ENCODE measurements at regions of chr11 and their contacts with region 1.

Region 1: GRCh38 chr11:123246749-123247495 is 51.9 kb upstream of the CLMP start:
- DNase-seq: peak; percentile 70 to 78 (median 77)
- H3K4me3 ChIP-seq: no peak overlapping the region
- H3K4me3 Mint-ChIP-seq: peak overlapping the region in 5 of 8 donors; percentile 27 to 60 (median 36)
- H3K27ac ChIP-seq: no peak overlapping the region
- H3K27ac Mint-ChIP-seq: no peak overlapping the region
- H3K4me1 ChIP-seq: no peaks in the 10 kb centered on the region
- H3K4me1 Mint-ChIP-seq: peaks cover 3 to 7% (median 4%) of the 10 kb centered on the region in 4 donors
- H3K27me3 ChIP-seq: no peaks in the 10 kb centered on the region
- H3K27me3 Mint-ChIP-seq: peaks cover 13 to 16% of the 10 kb centered on the region in 2 donors

Region 2: GRCh38 chr11:122863704-122864326 is 383.1 kb before region 1 on chr11:
- CTCF ChIA-PET with region 1: interaction called, 8 read pairs
- POLR2A ChIA-PET with region 1: no interaction called
- intact Hi-C with region 1: loop called (anchors 1 kb)
- DNase-seq: peak; percentile 24 to 49 (median 37)
- H3K4me3 ChIP-seq: no peak overlapping the region
- H3K4me3 Mint-ChIP-seq: no peak overlapping the region
- H3K27ac ChIP-seq: no peak overlapping the region
- H3K27ac Mint-ChIP-seq: no peak overlapping the region
- H3K4me1 ChIP-seq: no peaks in the 10 kb centered on the region
- H3K4me1 Mint-ChIP-seq: no peaks in the 10 kb centered on the region
- H3K27me3 ChIP-seq: no peaks in the 10 kb centered on the region
- H3K27me3 Mint-ChIP-seq: peaks cover 19 to 28% of the 10 kb centered on the region in 2 donors

Region 3: DNA sequence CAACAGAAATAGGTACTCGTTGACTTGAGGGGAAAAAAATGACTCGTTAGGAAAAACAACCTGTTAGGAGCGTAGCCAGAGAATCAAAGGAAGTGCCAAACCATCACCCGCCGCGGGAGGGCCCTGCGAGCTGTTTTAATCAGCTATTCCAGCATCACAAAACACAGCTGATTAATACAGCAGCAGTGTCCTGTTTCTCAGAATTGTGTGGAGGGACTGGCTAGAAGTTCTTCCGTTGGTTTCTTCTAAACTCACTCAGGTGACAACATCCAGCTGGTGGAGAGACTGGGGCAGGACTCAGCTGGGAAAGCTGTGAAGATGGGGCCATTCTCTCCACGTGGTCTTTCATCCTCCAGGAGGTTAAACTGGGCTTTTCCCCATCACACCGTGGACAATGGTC is 213.0 kb before region 1 on chr11:
- CTCF ChIA-PET with region 1: interaction called, 11 read pairs
- POLR2A ChIA-PET with region 1: no interaction called
- intact Hi-C with region 1: no loop called
- DNase-seq: no peak
- H3K4me3 ChIP-seq: no peak overlapping the region
- H3K4me3 Mint-ChIP-seq: no peak overlapping the region
- H3K27ac ChIP-seq: no peak overlapping the region
- H3K27ac Mint-ChIP-seq: no peak overlapping the region
- H3K4me1 ChIP-seq: no peaks in the 10 kb centered on the region
- H3K4me1 Mint-ChIP-seq: peaks cover 0 to 2% (median 0%) of the 10 kb centered on the region in 4 donors
- H3K27me3 ChIP-seq: no peaks in the 10 kb centered on the region
- H3K27me3 Mint-ChIP-seq: peaks cover 2 to 3% of the 10 kb centered on the region in 2 donors

Region 4: GRCh38 chr11:123083623-123084029 is 163.3 kb before region 1 on chr11:
- CTCF ChIA-PET with region 1: interaction called, 10 read pairs
- POLR2A ChIA-PET with region 1: no interaction called
- intact Hi-C with region 1: no loop called
- DNase-seq: peak; percentile 56 to 91 (median 72)
- H3K4me3 ChIP-seq: peak overlapping the region in 1 of 2 donors; percentile 3
- H3K4me3 Mint-ChIP-seq: peak overlapping the region; percentile 73 to 88 (median 78)
- H3K27ac ChIP-seq: peak overlapping the region; percentile 45
- H3K27ac Mint-ChIP-seq: peak overlapping the region; percentile 93 to 96 (median 93)
- H3K4me1 ChIP-seq: peaks cover 57% of the 10 kb centered on the region
- H3K4me1 Mint-ChIP-seq: peaks cover 31 to 66% (median 50%) of the 10 kb centered on the region in 4 donors
- H3K27me3 ChIP-seq: no peaks in the 10 kb centered on the region
- H3K27me3 Mint-ChIP-seq: no peaks in the 10 kb centered on the region

Region 5: DNA sequence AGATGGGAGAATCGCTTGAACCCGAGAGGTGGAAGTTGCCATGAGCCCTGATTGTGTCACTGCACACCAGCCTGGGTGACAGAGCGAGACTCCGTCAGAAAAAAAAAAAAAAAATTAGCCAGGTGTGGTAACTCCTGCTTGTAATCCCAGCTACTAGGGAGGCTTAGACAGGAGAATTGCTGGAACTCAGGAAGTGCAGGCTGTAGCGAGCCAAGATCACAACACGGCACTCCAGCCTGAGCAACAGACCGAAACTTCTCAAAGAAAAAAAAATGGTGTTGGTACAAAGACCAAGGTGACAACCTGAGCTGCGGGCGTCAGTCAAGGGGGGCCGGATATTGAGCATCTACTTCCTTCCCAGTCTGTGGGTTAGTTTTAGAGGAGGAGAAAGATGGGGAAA is 136.6 kb before region 1 on chr11:
- CTCF ChIA-PET with region 1: interaction called, 253 read pairs
- POLR2A ChIA-PET with region 1: interaction called, 3 read pairs
- intact Hi-C with region 1: loop called (anchors 1 kb)
- DNase-seq: no peak
- H3K4me3 ChIP-seq: no peak overlapping the region
- H3K4me3 Mint-ChIP-seq: peak overlapping the region in 5 of 8 donors; percentile 7 to 57 (median 23)
- H3K27ac ChIP-seq: no peak overlapping the region
- H3K27ac Mint-ChIP-seq: no peak overlapping the region
- H3K4me1 ChIP-seq: peaks cover 5% of the 10 kb centered on the region
- H3K4me1 Mint-ChIP-seq: peaks cover 5 to 9% (median 6%) of the 10 kb centered on the region in 4 donors
- H3K27me3 ChIP-seq: no peaks in the 10 kb centered on the region
- H3K27me3 Mint-ChIP-seq: no peaks in the 10 kb centered on the region

Region 6: GRCh38 chr11:123261345-123262106 is 14.6 kb after region 1 on chr11:
- CTCF ChIA-PET with region 1: interaction called, 27 read pairs
- POLR2A ChIA-PET with region 1: no interaction called
- intact Hi-C with region 1: no loop called
- DNase-seq: peak in 4 of 5 donors; percentile 28 to 38 (median 35)
- H3K4me3 ChIP-seq: no peak overlapping the region
- H3K4me3 Mint-ChIP-seq: peak overlapping the region in 5 of 8 donors; percentile 32 to 71 (median 49)
- H3K27ac ChIP-seq: no peak overlapping the region
- H3K27ac Mint-ChIP-seq: peak overlapping the region in 2 of 7 donors; percentile 4 to 59
- H3K4me1 ChIP-seq: peaks cover 7% of the 10 kb centered on the region
- H3K4me1 Mint-ChIP-seq: peaks cover 2 to 9% (median 7%) of the 10 kb centered on the region in 4 donors
- H3K27me3 ChIP-seq: peaks cover 4% of the 10 kb centered on the region
- H3K27me3 Mint-ChIP-seq: peaks cover 19 to 27% of the 10 kb centered on the region in 2 donors